Common myeloid progenitor, CD34-positive (primary cell): ENCODE measurements at regions of chr4 and their contacts with region 1.

Region 1: GRCh38 chr4:143381171-143382118 is 44.8 kb downstream of the GAB1 start:
- DNase-seq: peak in 2 of 3 donors; percentile 46 to 62
- H3K4me3 ChIP-seq: peak overlapping the region in 2 of 7 experiments; percentile 0 to 62
- H3K27ac ChIP-seq: peak overlapping the region; percentile 35 to 59
- H3K4me1 ChIP-seq: peaks cover 13 to 44% (median 28%) of the 10 kb centered on the region in 4 experiments
- H3K27me3 ChIP-seq: no peaks in the 10 kb centered on the region

Region 2: DNA sequence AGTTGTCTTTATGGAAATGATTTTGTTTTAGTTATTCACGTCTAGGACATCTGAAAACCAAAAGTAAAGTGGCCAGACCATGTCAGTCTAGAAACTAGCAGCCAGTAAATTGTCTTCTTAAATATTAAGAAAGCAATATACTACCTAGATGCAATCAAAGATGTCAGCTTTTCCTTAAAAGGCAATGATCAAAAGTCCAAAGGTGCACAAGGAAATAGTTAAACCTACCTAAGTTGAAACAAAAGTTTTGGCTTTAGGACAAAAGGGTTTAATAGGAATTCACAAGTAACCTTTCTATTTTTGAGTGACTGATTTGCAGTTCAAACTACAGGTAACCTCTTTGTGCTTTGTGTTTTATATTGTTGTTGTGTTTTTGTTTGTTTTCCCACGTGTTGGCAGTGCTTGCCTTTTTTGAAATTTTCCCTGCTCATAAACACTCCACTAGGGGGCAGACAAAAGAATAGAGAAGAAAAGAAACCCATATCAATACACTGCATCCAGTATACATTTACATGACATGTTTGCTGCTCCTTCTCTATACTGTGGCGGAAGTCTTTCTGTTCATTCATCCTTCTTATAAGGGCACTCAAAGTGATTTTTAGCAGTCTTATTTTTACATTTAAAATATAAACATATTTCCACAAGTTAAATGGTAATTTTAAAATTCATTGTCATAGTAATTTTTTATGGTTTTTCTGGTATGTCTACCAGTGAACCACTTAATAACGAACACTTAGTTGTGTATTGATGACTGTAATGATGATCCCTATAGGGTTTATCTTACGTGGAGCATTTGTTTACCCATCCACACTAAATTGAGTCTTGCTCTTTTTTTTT is 17.9 kb after region 1 on chr4:
- CTCF ChIA-PET with region 1: interaction called, 53 read pairs
- POLR2A ChIA-PET with region 1: no interaction called
- DNase-seq: peak; percentile 59 to 67 (median 63)
- H3K4me3 ChIP-seq: no peak overlapping the region
- H3K27ac ChIP-seq: no peak overlapping the region
- H3K4me1 ChIP-seq: peaks cover 0 to 16% (median 13%) of the 10 kb centered on the region in 4 experiments
- H3K27me3 ChIP-seq: no peaks in the 10 kb centered on the region